Activated CD4-positive, alpha-beta memory T cell treated with anti-CD3 and anti-CD28 coated beads, Interleukin-2, amount 10 ng/mL, durations not matched to agents 7 days and 5 days (primary cell): ENCODE measurements at regions of chr9 and their contacts with region 1.

Region 1: GRCh38 chr9:83707768-83708514 is at the start of gene UBQLN1:
- DNase-seq: peak; percentile 92
- H3K4me3 Mint-ChIP-seq: peak within 1 kb of the TSS; percentile 85
- H3K27ac Mint-ChIP-seq: peak within 1 kb of the TSS; percentile 98
- H3K4me1 Mint-ChIP-seq: peaks cover 36% of the 10 kb centered on the region
- H3K27me3 Mint-ChIP-seq: no peaks in the 10 kb centered on the region
- total RNA-seq, gene UBQLN1: 109 to 112 TPM

Region 2: DNA sequence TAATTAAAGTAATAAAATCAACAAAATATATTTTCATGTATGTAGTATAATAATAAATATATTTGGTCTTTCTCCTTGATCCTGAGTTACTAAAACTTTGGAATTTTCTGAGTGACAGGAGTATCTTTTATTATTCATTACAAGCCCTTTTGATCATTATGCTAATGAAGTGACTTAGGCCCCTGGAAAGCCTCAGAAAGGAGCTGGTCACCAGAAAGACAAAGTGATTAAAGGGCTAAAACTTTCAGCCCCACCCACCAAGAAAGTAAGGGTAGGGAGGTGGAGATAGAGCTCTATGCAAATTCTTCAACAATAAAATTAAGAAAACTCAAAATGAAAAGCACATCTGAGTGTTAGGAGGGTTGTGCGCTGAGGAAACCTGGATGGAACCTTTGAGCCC is 27.7 kb before region 1 on chr9:
- CTCF ChIA-PET with region 1: interaction called, 3 read pairs
- POLR2A ChIA-PET with region 1: interaction called, 17 read pairs
- DNase-seq: no peak
- H3K4me3 Mint-ChIP-seq: no peak overlapping the region
- H3K27ac Mint-ChIP-seq: no peak overlapping the region
- H3K4me1 Mint-ChIP-seq: peaks cover 31% of the 10 kb centered on the region
- H3K27me3 Mint-ChIP-seq: no peaks in the 10 kb centered on the region

Region 3: DNA sequence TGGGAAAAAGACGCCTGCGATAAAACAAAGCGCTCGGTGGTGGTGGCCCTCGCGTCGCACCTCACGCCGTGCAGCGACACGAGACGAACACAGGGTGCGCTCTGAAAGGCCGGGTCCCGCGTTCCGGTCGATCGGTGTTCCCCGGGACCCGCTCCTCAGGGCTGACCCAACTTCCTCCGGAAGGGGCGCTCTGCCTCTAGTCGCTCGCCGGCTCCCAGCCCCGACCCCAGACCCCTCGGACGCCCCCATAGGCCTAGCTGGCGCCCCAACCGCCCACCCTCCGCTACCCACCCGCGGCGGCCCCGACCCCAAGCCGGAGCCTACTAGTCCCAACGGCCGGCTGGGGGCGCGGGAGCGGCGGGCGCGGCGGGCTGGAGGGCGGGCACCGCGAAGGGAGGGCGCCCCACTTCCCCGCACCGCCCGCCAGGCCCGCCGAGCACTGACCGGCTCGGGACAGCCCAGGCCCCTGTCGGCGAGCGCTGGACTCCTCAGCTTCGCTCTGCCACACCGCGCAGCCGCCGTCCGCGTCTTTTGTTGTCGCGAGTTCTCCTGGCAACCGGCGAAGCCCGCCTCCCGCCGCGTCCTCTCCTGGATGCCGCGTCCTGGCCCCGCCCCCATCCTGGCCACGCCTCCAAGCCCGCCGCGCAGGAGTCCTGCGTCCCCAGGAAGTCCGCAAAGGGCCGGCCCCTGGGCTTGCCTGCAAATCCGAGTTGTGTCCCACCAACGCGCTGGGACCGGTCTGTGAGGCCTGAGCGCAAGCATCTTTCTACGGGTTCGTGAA is 213.2 kb after region 1 on chr9 and contains the start of gene KIF27:
- CTCF ChIA-PET with region 1: interaction called, 5 read pairs
- POLR2A ChIA-PET with region 1: interaction called, 14 read pairs
- DNase-seq: peak; percentile 98
- H3K4me3 Mint-ChIP-seq: peak within 1 kb of the TSS; percentile 81
- H3K27ac Mint-ChIP-seq: peak within 1 kb of the TSS; percentile 88
- H3K4me1 Mint-ChIP-seq: peaks cover 18% of the 10 kb centered on the region
- H3K27me3 Mint-ChIP-seq: no peaks in the 10 kb centered on the region
- total RNA-seq, gene KIF27: 2.3 TPM